ENCODE measurements at regions of chr17 and their contacts with region 1.

Region 1: GRCh38 chr17:37107406-37108083 is 158.8 kb downstream of the AATF start:
- H3K4me3 ChIP-seq: no peak overlapping the region
- H3K27ac ChIP-seq: no peak overlapping the region
- H3K4me1 ChIP-seq: peaks cover 9% of the 10 kb centered on the region
- CTCF ChIP-seq: no peak

Region 2: GRCh38 chr17:37094391-37094790 is 13.2 kb before region 1 on chr17:
- CTCF ChIA-PET with region 1: no interaction called
- POLR2A ChIA-PET with region 1: interaction called, 11 read pairs
- H3K4me3 ChIP-seq: no peak overlapping the region
- H3K27ac ChIP-seq: no peak overlapping the region
- H3K4me1 ChIP-seq: no peaks in the 10 kb centered on the region
- CTCF ChIP-seq: no peak

Region 3: GRCh38 chr17:37147301-37147812 is 39.8 kb after region 1 on chr17:
- CTCF ChIA-PET with region 1: no interaction called
- POLR2A ChIA-PET with region 1: no interaction called
- H3K4me3 ChIP-seq: no peak overlapping the region
- H3K27ac ChIP-seq: no peak overlapping the region
- H3K4me1 ChIP-seq: peaks cover 7% of the 10 kb centered on the region
- CTCF ChIP-seq: no peak